Posterior vena cava (tissue), 2 donors: ENCODE measurements at regions of chr7 and their contacts with region 1.

Region 1: GRCh38 chr7:40726562-40726961 is 591.8 kb downstream of the SUGCT start:
- DNase-seq: no peak

Region 2: GRCh38 chr7:41306486-41306885 is 579.9 kb after region 1 on chr7:
- intact Hi-C with region 1: loop called in 1 of 2 experiments (anchors 5 kb)
- DNase-seq: no peak